ENCODE measurements at regions of chr5 and their contacts with region 1.

Region 1: DNA sequence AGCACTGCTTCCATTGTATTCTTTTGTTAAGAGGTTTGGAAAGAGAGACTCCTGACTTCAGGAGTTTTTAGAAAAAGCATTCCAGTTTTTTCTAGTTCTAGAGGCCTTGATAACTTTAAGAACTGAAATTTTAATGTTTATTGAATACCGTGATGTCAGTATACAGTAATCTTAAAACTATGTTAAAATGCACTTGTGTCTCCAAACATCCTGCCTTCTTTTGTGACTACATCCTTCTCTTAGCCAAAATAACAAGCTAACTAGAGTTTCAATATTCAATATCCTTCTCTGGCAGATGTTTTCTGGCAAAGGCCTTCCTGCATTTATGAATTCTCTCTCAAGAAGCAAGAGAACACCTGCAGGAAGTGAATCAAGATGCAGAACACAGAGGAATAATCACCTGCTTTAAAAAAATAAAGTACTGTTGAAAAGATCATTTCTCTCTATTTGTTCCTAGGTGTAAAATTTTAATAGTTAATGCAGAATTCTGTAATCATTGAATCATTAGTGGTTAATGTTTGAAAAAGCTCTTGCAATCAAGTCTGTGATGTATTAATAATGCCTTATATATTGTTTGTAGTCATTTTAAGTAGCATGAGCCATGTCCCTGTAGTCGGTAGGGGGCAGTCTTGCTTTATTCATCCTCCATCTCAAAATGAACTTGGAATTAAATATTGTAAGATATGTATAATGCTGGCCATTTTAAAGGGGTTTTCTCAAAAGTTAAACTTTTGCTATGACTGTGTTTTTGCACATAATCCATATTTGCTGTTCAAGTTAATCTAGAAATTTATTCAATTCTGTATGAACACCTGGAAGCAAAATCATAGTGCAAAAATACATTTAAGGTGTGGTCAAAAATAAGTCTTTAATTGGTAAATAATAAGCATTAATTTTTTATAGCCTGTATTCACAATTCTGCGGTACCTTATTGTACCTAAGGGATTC is 43.1 kb downstream of the NDFIP1 start:
- DNase-seq: no peak
- ATAC-seq: peak; percentile 73

Region 2: DNA sequence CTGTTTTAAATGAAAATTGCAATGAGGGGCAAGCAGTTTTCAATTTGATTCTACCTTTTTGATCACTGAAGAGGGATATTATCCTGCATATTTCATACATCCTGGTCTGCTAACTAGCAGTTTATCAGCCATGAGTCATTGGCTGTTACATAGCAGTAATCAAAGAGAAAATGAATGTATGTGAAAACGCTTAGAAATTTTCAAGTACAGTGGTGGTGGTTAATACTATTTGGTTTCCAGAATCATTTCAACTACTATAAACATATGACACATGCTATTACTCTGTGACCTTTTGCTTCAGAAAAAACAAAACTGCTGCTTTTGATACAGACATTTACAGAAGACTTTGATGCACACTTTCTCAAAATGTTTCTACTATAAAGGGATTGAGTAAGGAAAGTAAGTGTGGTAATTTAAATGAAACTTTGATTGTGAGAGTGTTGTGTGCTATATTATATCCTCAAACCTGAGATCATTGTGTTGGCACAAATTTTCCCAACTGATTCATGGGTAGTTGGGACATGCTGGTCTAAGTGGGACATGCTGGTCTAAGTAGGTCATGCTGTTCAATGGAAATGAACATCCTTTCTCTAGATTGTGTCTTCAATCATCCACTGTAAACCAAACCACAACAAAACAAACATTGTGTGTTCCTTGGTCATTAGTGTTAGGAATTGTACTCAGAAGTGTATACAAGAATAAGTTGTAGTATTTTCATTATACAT is 177.7 kb before region 1 on chr5:
- intact Hi-C with region 1: no loop called
- DNase-seq: no peak
- ATAC-seq: no peak

Region 3: GRCh38 chr5:142324871-142325724 is 173.4 kb after region 1 on chr5 and contains the start of gene SPRY4:
- intact Hi-C with region 1: loop called (anchors 5 kb)
- DNase-seq: peak; percentile 94
- ATAC-seq: peak; percentile 74
- total RNA-seq, gene SPRY4: 9.7 TPM

Region 4: GRCh38 chr5:142548739-142549275 is 397.1 kb after region 1 on chr5:
- intact Hi-C with region 1: loop called (anchors 1 kb)
- DNase-seq: no peak
- ATAC-seq: peak; percentile 86

Region 5: DNA sequence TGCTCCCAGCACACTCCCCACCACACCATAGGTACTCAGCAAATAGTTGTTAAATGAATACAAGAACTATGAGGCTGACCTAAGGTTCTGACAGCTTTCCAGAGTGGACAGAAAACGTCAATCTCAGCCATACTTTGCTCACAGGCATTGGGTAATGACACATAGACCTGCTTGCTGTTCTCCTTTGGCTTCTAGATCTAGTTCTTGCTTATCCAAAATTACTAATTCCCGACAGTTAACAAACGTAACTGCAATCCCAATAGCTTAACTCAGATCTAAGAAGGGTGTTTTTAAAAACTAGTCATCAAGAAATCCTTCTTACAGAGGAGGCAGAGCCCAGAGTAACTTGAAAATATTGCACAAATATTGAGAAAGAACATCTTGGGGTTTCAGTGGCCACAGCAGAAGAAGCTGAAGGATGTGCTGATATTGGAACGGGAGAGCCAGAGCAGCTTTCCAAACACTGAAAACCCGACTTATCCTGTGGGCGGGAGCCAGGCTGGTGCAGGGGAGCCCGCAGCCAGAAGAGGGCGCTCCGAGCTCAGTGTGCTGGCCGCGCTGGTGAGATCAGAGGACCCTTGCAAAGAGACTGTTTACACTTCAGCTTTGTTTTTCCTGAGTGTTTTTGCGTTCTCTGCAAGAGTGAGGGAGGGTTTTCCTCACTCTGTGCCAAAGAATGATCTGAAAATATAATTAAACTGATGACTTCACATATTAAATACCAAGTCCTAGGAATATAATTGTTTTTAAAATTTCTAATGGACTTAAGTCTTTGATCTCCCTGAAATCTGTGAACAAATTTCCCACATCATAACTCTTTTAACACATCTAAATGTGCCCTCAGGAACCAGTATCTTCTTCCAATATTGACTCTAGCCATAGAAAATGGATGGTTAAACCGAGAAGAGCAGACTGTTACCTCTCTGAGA is 503.9 kb after region 1 on chr5:
- intact Hi-C with region 1: loop called (anchors 2 kb)
- DNase-seq: peak; percentile 93
- ATAC-seq: peak; percentile 97